Heart right ventricle (tissue), 16 donors: ENCODE measurements at regions of chr15 and their contacts with region 1.

Region 1: DNA sequence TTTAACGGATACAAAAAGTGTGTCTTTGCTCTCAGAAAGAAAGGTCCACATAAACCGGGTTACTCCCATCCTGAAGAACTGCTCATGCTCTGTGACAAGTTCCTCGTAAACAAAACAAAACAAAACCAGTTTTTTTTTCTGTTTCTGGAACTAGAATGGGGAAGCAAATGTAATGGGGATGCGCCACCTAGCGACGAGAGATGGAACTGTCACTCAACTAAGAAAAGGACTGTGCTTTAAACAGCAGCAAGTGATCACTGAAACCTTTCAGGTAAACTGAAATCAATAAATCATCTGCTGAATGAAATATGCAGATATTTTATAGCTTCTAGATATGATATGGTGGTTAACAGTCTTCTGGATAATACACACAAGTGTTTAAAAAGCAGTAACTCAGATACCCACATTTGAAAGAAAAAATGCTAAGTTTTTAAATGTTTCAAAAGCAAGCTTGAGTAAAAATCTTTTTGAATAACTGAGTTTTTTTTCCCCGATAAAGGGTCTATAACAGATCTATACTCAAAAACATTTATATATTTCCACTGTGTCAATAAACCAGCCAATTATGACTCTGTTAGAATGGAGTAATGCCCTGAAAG is 10.9 kb downstream of the TM2D3 start:
- DNase-seq: peak; percentile 59 to 77
- ATAC-seq: peak; percentile 38 to 84 (median 73)
- H3K4me3 ChIP-seq: peak overlapping the region in 1 of 10 donors; percentile 7
- H3K27ac ChIP-seq: peak overlapping the region in 8 of 10 donors; percentile 14 to 81 (median 44)
- H3K4me1 ChIP-seq: peaks cover 0 to 31% (median 22%) of the 10 kb centered on the region in 9 donors
- H3K27me3 ChIP-seq: no peaks in the 10 kb centered on the region
- CTCF ChIP-seq: peak; percentile 93 to 99 (median 95)

Region 2: GRCh38 chr15:101206176-101206591 is 435.1 kb before region 1 on chr15:
- intact Hi-C with region 1: no loop called
- DNase-seq: no peak
- ATAC-seq: peak in 1 of 8 donors; percentile 42
- H3K4me3 ChIP-seq: no peak overlapping the region
- H3K27ac ChIP-seq: peak overlapping the region in 1 of 10 donors; percentile 82
- H3K4me1 ChIP-seq: peaks cover 7 to 97% (median 71%) of the 10 kb centered on the region in 9 donors
- H3K27me3 ChIP-seq: no peaks in the 10 kb centered on the region
- CTCF ChIP-seq: no peak

Region 3: GRCh38 chr15:101294731-101295606 is 346.3 kb before region 1 on chr15 and contains the start of gene SNRPA1:
- intact Hi-C with region 1: loop called in 9 of 10 experiments (anchors 2 to 5 kb)
- DNase-seq: peak; percentile 97 to 99
- ATAC-seq: peak; percentile 93 to 96 (median 94)
- H3K4me3 ChIP-seq: peak within 1 kb of the TSS; percentile 58 to 99 (median 91)
- H3K27ac ChIP-seq: peak within 1 kb of the TSS; percentile 90 to 99 (median 96)
- H3K4me1 ChIP-seq: peaks cover 0 to 43% (median 34%) of the 10 kb centered on the region in 9 donors
- H3K27me3 ChIP-seq: no peaks in the 10 kb centered on the region
- CTCF ChIP-seq: no peak
- total RNA-seq, gene SNRPA1: 23.8 to 36.3 (median 29.9) TPM

Region 4: DNA sequence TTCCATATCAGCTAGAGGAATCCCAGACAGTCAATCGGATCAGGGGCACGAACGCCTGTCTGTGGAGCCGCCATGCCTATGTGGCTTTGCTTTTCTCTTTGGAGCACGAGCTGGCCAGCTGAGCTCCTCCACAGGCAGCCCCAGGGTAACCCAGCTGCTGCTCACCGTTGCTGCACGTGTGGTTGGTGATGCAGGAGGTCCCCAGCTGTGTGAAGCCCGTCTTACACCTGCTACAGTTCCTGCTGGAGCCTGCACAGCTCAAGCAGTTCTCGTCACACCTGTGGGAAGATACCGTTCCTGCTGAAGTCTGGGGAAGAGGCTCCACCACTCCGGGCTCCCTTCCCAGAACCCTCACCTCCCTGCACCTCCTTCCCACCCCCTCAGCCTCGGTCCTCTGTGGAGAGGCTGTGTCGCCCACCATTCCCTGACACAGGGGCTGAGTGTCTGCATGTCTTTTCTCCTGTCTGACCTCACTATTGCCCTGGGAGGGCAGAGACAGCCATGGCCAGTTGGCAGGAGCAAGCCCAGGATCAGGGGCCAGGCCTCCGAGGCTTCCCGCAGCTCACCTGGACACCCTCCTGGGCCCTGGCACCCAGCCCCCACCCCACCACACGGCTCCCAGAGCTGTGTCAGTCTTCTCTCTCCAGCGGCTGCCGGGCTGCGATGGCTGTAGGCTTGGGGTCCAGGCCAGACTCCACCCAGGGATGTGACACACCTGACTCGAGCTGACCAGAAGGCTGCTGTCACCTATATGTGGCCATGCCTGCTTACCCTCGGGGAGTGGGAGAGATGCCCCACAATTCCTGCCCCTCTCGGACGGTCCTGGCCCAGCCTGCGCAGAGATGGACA is 334.0 kb before region 1 on chr15:
- intact Hi-C with region 1: loop called in 3 of 10 experiments (anchors 5 kb)
- DNase-seq: no peak
- ATAC-seq: peak in 2 of 8 donors; percentile 23 to 24
- H3K4me3 ChIP-seq: no peak overlapping the region
- H3K27ac ChIP-seq: no peak overlapping the region
- H3K4me1 ChIP-seq: no peaks in the 10 kb centered on the region
- H3K27me3 ChIP-seq: no peaks in the 10 kb centered on the region
- CTCF ChIP-seq: no peak

Region 5: GRCh38 chr15:101445562-101446517 is 195.4 kb before region 1 on chr15:
- intact Hi-C with region 1: loop called in 1 of 10 experiments (anchors 10 kb)
- DNase-seq: peak; percentile 69 to 72
- ATAC-seq: peak; percentile 71 to 87 (median 82)
- H3K4me3 ChIP-seq: no peak overlapping the region
- H3K27ac ChIP-seq: peak overlapping the region; percentile 48 to 85 (median 68)
- H3K4me1 ChIP-seq: peaks cover 7 to 53% (median 32%) of the 10 kb centered on the region in 9 donors
- H3K27me3 ChIP-seq: no peaks in the 10 kb centered on the region
- CTCF ChIP-seq: peak in 1 of 9 donors; percentile 20

Region 6: DNA sequence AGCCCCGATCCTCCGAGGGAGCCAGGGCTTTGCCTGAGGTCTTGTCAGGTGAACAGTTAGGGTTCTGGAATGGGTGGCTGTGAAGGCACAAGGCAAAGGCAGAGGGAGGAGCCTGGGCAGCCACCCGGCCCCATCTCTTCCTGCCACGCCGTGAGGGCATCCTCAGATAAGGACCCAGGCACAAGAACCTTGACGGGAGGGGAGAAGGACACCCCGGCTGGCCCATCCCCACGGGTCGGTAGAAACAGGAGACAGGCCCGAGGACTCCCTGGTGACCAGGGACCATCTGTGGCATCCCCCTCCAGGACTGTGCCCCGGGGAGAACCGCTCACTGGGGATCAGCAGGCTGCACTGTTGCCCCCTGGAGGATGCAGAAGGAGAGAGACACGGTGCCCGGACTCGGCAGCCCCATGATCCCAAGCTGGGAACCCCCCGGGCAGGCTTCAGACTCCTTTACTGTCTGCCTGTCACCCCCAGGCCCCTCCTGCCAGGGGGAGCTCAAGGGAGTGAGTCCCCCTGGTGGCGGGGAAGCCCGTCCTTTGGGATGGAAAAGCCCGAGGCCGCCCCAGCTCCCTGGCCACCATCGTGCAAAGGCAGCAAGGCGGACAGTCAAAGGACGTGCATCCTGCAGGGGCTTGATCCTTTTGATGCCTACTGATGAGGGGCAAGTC is 139.4 kb before region 1 on chr15:
- intact Hi-C with region 1: loop called in 1 of 10 experiments (anchors 10 kb)
- DNase-seq: no peak
- ATAC-seq: peak; percentile 35 to 70 (median 58)
- H3K4me3 ChIP-seq: no peak overlapping the region
- H3K27ac ChIP-seq: no peak overlapping the region
- H3K4me1 ChIP-seq: peaks cover 2 to 32% (median 27%) of the 10 kb centered on the region in 9 donors
- H3K27me3 ChIP-seq: peaks cover 0 to 17% (median 0%) of the 10 kb centered on the region in 7 donors
- CTCF ChIP-seq: peak in 8 of 9 donors; percentile 5 to 71 (median 59)

Region 7: GRCh38 chr15:101528108-101528916 is 113.0 kb before region 1 on chr15:
- intact Hi-C with region 1: loop called in 1 of 10 experiments (anchors 10 kb)
- DNase-seq: peak; percentile 33 to 56
- ATAC-seq: peak; percentile 74 to 91 (median 89)
- H3K4me3 ChIP-seq: peak overlapping the region in 1 of 10 donors; percentile 7
- H3K27ac ChIP-seq: peak overlapping the region in 9 of 10 donors; percentile 9 to 73 (median 48)
- H3K4me1 ChIP-seq: peaks cover 6 to 24% (median 17%) of the 10 kb centered on the region in 9 donors
- H3K27me3 ChIP-seq: peaks cover 0 to 7% (median 0%) of the 10 kb centered on the region in 7 donors
- CTCF ChIP-seq: no peak

Region 8: DNA sequence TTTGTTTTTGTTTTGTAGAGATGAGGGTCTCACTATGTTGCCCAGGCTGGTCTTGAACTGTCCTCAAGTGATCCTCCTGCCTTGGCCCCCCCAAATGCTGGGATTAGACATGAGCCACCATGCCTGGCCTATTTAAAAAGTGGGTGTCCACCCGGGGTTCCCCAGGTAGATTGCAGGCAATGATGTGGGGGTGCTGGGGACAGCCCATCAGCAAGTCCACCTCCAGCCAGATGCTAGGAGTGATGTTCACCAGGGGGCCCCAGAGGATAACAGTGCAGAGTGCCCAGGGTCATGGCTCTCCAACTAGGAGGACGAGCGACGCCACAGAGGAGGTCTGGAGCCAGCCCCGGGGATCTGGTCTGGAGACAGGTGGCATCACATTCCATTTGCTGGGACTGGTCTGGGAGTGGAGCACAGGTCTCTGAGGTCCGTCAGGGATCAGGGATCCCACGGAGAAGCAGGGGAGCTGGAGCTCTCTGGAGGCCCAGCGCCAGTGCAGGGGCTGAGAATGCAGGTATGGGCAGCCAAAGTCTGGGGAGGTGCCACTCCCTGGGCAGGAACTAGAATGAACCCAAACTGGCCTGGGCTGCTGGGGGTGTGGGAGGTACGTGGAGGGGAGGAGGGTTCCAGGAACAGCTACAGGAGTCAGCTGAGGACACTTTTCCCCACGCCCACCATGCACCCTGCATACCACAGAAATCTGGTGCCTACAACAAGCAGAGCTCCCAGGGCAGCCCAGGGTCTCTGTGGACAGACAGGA is 100.6 kb before region 1 on chr15:
- intact Hi-C with region 1: loop called in 3 of 10 experiments (anchors 5 to 10 kb)
- DNase-seq: no peak
- ATAC-seq: peak in 1 of 8 donors; percentile 66
- H3K4me3 ChIP-seq: no peak overlapping the region
- H3K27ac ChIP-seq: no peak overlapping the region
- H3K4me1 ChIP-seq: peaks cover 0 to 15% (median 0%) of the 10 kb centered on the region in 9 donors
- H3K27me3 ChIP-seq: peaks cover 0 to 13% (median 0%) of the 10 kb centered on the region in 7 donors
- CTCF ChIP-seq: peak in 5 of 9 donors; percentile 11 to 28 (median 24)

Region 9: DNA sequence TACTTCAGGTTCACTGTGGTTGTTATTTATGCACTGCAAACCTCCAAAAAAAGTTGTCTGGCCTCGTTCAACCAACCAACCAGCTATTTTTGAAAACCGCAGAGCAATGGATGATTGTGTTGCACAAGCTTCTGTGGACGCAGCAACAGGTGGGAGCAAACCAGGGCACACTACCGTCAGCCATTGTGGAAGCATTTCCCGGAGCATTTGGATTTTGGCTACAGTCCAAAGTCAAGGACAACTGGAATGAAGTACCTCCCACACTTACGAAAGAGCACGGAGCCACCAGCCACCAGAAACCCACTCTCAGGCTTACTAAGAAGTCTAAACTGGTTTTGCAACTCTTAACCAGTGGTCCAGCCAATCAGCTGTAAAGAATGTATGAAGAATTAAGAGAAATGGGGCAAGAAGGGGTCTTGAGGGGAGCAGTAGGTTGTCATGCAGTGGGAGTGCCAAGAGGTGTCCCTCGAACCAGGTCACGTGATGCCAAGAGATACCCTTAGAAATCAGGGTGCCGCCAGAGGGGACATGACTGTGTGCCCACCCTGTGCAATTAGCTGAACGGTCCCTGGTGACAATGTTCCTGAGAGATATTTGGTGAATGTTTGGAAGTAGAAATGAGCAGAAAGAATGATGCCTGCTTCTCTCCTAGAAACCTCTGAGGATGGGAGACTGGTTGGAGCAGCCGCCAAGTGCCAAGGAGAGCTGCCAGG is 82.9 kb before region 1 on chr15:
- intact Hi-C with region 1: no loop called
- DNase-seq: no peak
- ATAC-seq: peak in 1 of 8 donors; percentile 46
- H3K4me3 ChIP-seq: no peak overlapping the region
- H3K27ac ChIP-seq: no peak overlapping the region
- H3K4me1 ChIP-seq: peaks cover 0 to 14% (median 0%) of the 10 kb centered on the region in 9 donors
- H3K27me3 ChIP-seq: peaks cover 0 to 8% (median 3%) of the 10 kb centered on the region in 7 donors
- CTCF ChIP-seq: no peak

Region 10: DNA sequence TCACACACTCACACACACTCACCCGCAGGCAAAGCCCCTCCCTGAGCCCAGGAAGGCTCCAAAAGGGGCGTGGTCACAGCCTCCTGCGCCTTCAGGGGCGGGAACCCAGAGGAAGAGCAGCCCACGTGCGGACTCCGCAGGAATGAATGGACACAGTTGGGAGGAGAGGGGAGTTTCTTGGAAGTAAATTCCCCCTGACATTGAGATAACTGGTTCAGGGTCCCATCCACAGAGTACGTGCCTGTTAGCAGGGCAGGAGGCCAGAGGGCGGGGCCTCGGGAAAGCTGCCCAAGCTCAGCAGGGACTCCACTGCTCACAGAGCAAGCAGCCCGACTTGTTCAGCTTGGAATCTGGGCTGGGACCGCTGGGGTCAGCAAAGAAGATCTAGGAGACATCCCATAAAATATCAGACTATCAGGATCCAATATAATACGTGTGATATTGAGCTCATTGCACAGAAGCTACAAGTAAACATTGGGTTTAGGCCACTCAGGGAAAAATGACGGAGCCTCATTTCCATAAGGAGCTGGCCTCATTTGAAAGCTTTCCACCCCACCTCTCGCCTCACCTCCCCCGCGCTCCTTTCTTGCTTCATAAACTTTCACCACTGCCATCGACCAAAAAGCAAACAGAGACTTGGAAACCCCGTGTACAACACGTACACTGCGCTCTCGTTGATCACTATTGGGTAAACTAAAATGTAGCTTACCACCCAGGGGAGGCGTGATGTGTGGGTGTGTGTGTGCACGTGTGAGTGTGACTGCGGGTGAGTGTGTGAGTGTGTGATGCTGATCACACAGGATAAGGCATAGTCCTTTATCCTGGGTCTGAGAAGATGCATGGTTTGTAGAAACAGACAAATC is 25.0 kb before region 1 on chr15:
- intact Hi-C with region 1: no loop called
- DNase-seq: peak; percentile 58 to 80
- ATAC-seq: peak; percentile 50 to 65 (median 59)
- H3K4me3 ChIP-seq: peak overlapping the region in 3 of 10 donors; percentile 1 to 32 (median 20)
- H3K27ac ChIP-seq: peak overlapping the region in 7 of 10 donors; percentile 8 to 72 (median 48)
- H3K4me1 ChIP-seq: peaks cover 21 to 83% (median 57%) of the 10 kb centered on the region in 9 donors
- H3K27me3 ChIP-seq: no peaks in the 10 kb centered on the region
- CTCF ChIP-seq: no peak